Dorsolateral prefrontal cortex (tissue), 120 donors: ENCODE measurements at regions of chr20 and their contacts with region 1.

Region 1: GRCh38 chr20:59284470-59284869 is 15.9 kb upstream of the EDN3 start:
- DNase-seq: no peak
- H3K4me3 ChIP-seq: no peak overlapping the region
- H3K27ac ChIP-seq: no peak overlapping the region
- H3K27me3 ChIP-seq: peaks cover 0 to 12% (median 0%) of the 10 kb centered on the region in 45 donors
- CTCF ChIP-seq: no peak

Region 2: DNA sequence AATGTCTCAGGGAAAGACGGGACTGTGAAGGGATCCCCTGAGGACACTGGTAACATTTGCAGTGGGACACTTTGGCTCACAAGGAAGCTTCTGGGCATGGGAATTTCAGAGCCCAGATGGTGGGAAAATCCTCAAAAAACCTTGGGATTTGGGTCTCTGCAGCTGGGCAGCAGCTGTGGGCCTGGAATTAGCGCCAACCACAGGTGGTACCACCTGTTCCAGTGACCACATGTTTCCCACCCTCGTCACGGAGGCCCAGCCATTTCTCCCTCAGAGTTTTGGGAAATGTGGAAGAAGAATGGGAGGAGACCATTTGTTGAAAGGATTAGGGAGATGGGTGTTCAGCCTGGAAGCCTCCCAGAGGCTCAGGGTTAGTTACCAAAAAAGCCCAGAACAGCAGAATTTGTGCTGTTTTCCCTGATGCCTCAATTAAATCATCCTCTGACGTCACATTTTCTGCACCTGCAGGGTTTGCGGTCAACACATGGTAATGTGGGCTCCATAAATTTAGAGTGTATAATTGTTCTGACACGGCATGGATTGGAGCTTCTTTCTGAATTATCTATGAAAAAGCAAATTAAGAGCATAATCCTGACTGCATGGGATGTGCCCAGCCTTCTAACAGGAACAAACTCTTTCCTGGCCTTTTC is 50.3 kb after region 1 on chr20:
- intact Hi-C with region 1: loop called in 1 of 2 experiments (anchors 2 kb)
- DNase-seq: no peak
- H3K4me3 ChIP-seq: no peak overlapping the region
- H3K27ac ChIP-seq: no peak overlapping the region
- H3K27me3 ChIP-seq: peaks cover 0 to 10% (median 0%) of the 10 kb centered on the region in 45 donors
- CTCF ChIP-seq: no peak